ENCODE measurements at regions of chr1 and their contacts with region 1.

Region 1: DNA sequence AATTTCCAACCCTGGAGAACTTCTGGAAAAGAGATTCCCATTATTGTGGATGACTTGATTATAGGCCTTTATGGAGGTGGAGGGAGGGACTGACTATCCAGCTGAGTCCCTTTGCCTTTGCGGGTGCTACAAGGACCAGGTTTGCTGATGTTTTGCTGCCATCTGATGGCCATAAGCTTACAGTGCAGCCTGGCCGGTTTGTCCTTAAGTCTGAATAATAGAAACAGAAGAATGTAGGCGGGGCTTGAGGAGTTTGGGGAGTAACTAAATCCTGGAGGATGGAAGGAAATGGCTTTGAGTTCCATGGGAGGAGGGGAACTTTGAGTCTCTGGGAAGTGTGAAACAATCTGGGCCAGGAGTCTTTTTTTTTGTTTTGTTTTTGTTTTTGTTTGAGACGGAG is 55.7 kb upstream of the CD1D start:
- DNase-seq: peak; percentile 84
- H3K4me3 ChIP-seq: no peak overlapping the region
- H3K27ac ChIP-seq: no peak overlapping the region
- H3K4me1 ChIP-seq: no peaks in the 10 kb centered on the region
- H3K27me3 ChIP-seq: no peaks in the 10 kb centered on the region
- CTCF ChIP-seq: peak; percentile 87

Region 2: DNA sequence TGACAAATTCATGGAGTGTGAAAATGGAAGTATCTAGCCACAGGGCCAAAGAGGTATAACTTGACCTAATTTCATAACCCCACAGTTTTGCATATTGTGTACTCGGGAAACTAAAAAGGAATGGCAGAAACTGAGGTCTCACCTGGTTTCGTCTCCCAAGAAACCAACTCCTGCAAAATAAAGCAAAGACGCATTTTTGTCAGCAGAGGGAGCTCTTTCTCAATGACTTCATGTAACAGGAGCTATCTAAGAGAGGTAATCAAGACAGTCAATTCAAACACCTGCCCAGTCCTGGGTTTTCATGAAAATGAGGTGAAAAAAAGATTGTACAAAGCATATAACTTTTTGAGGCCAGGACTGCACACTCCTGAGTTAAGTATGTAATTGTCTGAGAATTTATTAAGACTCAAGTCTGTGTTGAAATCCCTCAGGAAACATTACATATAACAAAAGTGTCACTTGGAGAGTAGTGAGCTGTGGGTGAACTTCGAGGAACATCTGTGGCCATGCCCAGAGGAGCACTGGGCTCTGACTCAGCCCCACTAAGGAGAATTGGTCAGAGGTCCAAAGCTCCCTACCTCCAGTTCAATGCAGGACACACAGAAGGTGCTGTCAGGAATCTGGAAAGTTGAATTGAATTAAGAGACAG is 544.7 kb before region 1 on chr1:
- intact Hi-C with region 1: loop called (anchors 10 kb)
- DNase-seq: peak; percentile 49
- H3K4me3 ChIP-seq: no peak overlapping the region
- H3K27ac ChIP-seq: no peak overlapping the region
- H3K4me1 ChIP-seq: no peaks in the 10 kb centered on the region
- H3K27me3 ChIP-seq: no peaks in the 10 kb centered on the region
- CTCF ChIP-seq: peak; percentile 77

Region 3: DNA sequence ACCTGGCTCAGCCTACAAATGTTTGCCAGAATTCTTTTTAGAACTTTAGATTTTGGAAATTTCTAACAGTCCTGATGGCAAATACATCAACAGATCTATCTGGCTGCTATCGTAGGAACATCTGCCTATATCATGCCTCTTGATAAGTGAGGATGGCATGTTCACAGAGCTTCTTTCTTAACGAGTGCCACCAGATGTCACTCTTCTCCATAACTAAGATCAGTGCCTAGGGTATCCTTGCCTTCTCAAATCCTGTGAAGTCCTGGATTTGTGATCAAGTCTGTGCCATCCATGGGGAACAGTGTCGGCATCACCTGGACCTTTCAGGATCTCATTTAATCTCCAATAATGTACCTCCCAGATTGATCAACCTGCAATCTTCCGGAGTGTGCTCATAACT is 246.9 kb before region 1 on chr1:
- intact Hi-C with region 1: loop called (anchors 2 kb)
- DNase-seq: no peak
- H3K4me3 ChIP-seq: no peak overlapping the region
- H3K27ac ChIP-seq: no peak overlapping the region
- H3K4me1 ChIP-seq: no peaks in the 10 kb centered on the region
- H3K27me3 ChIP-seq: no peaks in the 10 kb centered on the region
- CTCF ChIP-seq: peak; percentile 25

Region 4: DNA sequence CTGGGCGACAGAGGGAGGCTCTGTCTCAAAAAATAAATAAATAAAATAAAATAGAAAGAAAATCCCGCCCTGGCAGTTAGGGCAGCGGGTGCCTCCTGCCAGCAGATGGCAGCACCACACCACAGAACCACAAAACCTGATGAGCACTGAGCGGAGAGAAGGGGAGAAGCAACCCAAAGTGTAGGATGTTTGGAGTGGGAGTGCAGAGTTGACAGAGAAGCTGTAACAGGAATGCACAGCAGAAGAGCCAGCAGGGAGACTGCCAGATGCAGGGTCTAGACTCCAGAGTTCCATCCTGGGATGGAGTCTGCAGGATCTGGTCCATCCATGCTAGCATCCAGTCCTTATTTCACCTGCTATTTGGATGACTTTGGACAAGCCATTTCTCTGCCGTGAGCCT is 161.3 kb before region 1 on chr1:
- intact Hi-C with region 1: loop called (anchors 2 kb)
- DNase-seq: peak; percentile 78
- H3K4me3 ChIP-seq: no peak overlapping the region
- H3K27ac ChIP-seq: no peak overlapping the region
- H3K4me1 ChIP-seq: peaks cover 3% of the 10 kb centered on the region
- H3K27me3 ChIP-seq: no peaks in the 10 kb centered on the region
- CTCF ChIP-seq: peak; percentile 91

Region 5: GRCh38 chr1:158028969-158029368 is 96.0 kb before region 1 on chr1:
- intact Hi-C with region 1: no loop called
- DNase-seq: no peak
- H3K4me3 ChIP-seq: no peak overlapping the region
- H3K27ac ChIP-seq: no peak overlapping the region
- H3K4me1 ChIP-seq: no peaks in the 10 kb centered on the region
- H3K27me3 ChIP-seq: no peaks in the 10 kb centered on the region
- CTCF ChIP-seq: no peak

Region 6: GRCh38 chr1:158087320-158087927 is 37.6 kb before region 1 on chr1:
- intact Hi-C with region 1: loop called (anchors 5 kb)
- DNase-seq: peak; percentile 58
- H3K4me3 ChIP-seq: no peak overlapping the region
- H3K27ac ChIP-seq: no peak overlapping the region
- H3K4me1 ChIP-seq: no peaks in the 10 kb centered on the region
- H3K27me3 ChIP-seq: no peaks in the 10 kb centered on the region
- CTCF ChIP-seq: peak; percentile 82